Activated CD4-positive, alpha-beta T cell treated with anti-CD3 and anti-CD28 coated beads for 36 hours (primary cell): ENCODE measurements at regions of chr17 and their contacts with region 1.

Region 1: GRCh38 chr17:56222255-56222654 is 69.0 kb downstream of the ANKFN1 start:
- DNase-seq: no peak
- ATAC-seq: no peak
- H3K4me3 Mint-ChIP-seq: no peak overlapping the region
- H3K27ac Mint-ChIP-seq: no peak overlapping the region
- H3K4me1 Mint-ChIP-seq: no peaks in the 10 kb centered on the region
- H3K27me3 Mint-ChIP-seq: no peaks in the 10 kb centered on the region

Region 2: DNA sequence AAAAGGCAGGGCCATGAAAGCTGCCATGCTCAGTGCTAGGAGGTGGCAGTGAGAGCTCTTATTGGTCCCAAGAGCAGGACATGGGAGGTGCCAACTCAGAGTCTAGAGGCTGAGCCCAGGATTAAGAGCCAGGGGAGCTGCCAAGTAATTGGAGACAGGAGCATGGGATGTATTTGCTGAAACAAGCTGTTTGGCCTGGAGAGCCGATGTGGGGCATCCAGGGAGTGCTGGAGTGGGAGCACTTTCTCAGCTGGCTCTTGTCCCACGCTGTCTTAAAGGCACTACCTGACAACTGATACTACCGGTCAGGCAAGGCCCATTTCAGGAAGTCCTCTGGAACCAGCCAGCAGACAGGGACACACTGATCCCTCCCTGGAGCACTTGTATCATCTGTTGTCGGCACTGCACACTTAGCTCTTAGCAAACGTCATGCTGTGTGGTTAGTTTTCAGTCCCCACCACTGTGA is 49.7 kb before region 1 on chr17:
- CTCF ChIA-PET with region 1: no interaction called
- POLR2A ChIA-PET with region 1: no interaction called
- intact Hi-C with region 1: loop called in 1 of 2 experiments (anchors 5 kb)
- DNase-seq: no peak
- ATAC-seq: no peak
- H3K4me3 Mint-ChIP-seq: no peak overlapping the region
- H3K27ac Mint-ChIP-seq: no peak overlapping the region
- H3K4me1 Mint-ChIP-seq: no peaks in the 10 kb centered on the region
- H3K27me3 Mint-ChIP-seq: no peaks in the 10 kb centered on the region

Region 3: DNA sequence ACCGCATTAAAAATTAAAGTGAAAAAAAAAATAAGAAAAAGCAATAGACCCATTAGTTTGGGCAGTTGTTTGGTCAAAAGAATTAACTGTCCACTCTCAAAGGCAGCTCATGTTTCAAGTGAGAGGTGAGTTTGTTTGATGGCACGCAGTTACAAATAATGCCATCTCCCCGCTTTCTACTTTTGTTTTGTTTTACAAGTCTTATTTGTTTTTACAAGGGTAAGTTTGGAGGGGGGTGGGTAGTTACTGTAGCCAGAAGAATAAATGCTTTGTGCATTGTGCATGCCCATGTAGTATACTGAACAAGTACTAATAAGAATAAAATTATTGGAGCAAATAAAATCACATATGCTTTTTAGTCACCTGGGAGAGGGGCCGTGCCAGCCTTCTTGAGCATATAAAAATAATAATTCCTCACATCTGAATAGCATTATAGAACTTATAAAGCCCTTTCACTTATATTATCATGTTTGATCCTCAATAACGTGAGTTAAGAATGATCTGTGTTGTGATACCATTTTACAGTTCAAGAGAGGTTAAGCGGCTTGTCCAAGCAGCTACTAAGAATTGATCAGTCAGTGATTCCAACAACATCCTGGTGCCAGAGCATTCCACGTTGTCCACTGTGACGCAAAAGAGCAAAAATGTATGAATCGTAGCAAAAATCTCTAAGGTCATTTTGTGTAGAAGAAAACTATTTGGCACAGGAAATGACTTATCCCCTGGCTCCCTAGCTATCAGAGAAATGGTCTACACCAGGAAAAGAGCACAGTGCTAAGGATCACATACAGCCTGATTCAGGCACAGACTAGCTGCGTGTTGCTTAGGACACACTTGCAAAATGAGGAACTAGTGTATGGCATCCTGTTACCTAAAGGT is 36.1 kb before region 1 on chr17:
- CTCF ChIA-PET with region 1: no interaction called
- POLR2A ChIA-PET with region 1: no interaction called
- intact Hi-C with region 1: no loop called
- DNase-seq: no peak
- ATAC-seq: no peak
- H3K4me3 Mint-ChIP-seq: no peak overlapping the region
- H3K27ac Mint-ChIP-seq: no peak overlapping the region
- H3K4me1 Mint-ChIP-seq: no peaks in the 10 kb centered on the region
- H3K27me3 Mint-ChIP-seq: peaks cover 2% of the 10 kb centered on the region